Heart left ventricle (tissue), 16 donors: ENCODE measurements at regions of chr19 and their contacts with region 1.

Region 1: GRCh38 chr19:2475702-2476450 is at the start of gene GADD45B:
- DNase-seq: peak; percentile 98
- ATAC-seq: peak; percentile 78 to 89 (median 84)
- H3K4me3 ChIP-seq: peak within 1 kb of the TSS; percentile 60 to 98 (median 88)
- H3K27ac ChIP-seq: peak within 1 kb of the TSS; percentile 82 to 96 (median 91)
- H3K4me1 ChIP-seq: peaks cover 4 to 42% (median 28%) of the 10 kb centered on the region in 12 donors
- H3K27me3 ChIP-seq: no peaks in the 10 kb centered on the region
- CTCF ChIP-seq: no peak
- POLR2A ChIP-seq: peak; percentile 100
- total RNA-seq, gene GADD45B: 20.3 to 155 (median 46.6) TPM

Region 2: DNA sequence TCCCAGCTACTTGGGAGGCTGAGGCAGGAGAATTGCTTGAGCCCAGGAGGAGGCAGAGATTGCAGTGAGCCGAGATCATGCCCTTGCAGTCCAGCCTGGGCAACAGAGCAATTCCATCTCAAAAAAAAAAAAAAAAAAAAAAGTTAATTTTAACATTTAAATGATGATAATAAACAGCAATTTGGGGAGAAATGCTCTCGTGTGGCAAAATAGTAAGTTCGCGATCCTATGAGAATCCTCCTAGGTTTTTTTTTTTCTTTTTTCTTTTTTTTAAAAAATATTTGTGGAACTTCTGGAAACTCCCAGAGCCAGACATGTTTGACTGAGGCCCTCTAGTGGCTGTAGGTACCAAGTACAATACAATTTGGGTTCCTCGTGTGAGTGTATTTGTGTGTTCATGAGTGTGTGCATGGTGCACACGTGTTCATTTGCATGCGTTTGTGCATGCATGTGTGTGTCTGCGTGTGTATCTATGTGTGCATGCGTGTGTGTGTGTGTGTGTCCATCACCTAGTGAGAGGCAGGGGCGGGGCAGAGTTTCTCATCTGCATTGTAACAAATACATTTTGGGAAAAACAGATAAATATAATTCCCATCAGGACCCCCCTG is 84.7 kb before region 1 on chr19:
- intact Hi-C with region 1: no loop called
- DNase-seq: peak in 2 of 5 donors; percentile 34 to 35
- ATAC-seq: peak in 3 of 4 donors; percentile 50 to 62 (median 62)
- H3K4me3 ChIP-seq: no peak overlapping the region
- H3K27ac ChIP-seq: no peak overlapping the region
- H3K4me1 ChIP-seq: peaks cover 0 to 5% (median 0%) of the 10 kb centered on the region in 12 donors
- H3K27me3 ChIP-seq: peaks cover 0 to 20% (median 0%) of the 10 kb centered on the region in 9 donors
- CTCF ChIP-seq: peak; percentile 67 to 78 (median 74)
- POLR2A ChIP-seq: no peak

Region 3: GRCh38 chr19:2494444-2495129 is 18.7 kb after region 1 on chr19:
- intact Hi-C with region 1: loop called in 4 of 10 experiments (anchors 1 to 2 kb)
- DNase-seq: peak; percentile 87 to 94 (median 89)
- ATAC-seq: peak; percentile 52 to 81 (median 78)
- H3K4me3 ChIP-seq: peak overlapping the region; percentile 39 to 76 (median 66)
- H3K27ac ChIP-seq: peak overlapping the region; percentile 75 to 98 (median 92)
- H3K4me1 ChIP-seq: peaks cover 2 to 47% (median 23%) of the 10 kb centered on the region in 12 donors
- H3K27me3 ChIP-seq: peaks cover 0 to 27% (median 0%) of the 10 kb centered on the region in 9 donors
- CTCF ChIP-seq: no peak
- POLR2A ChIP-seq: peak in 1 of 2 donors; percentile 24

Region 4: GRCh38 chr19:2524838-2525723 is 49.2 kb after region 1 on chr19:
- intact Hi-C with region 1: loop called in 1 of 10 experiments (anchors 5 kb)
- DNase-seq: peak in 3 of 5 donors; percentile 54 to 68 (median 56)
- ATAC-seq: peak; percentile 40 to 74 (median 66)
- H3K4me3 ChIP-seq: peak overlapping the region in 9 of 12 donors; percentile 1 to 40 (median 24)
- H3K27ac ChIP-seq: peak overlapping the region in 2 of 12 donors; percentile 14 to 60
- H3K4me1 ChIP-seq: peaks cover 0 to 20% (median 7%) of the 10 kb centered on the region in 12 donors
- H3K27me3 ChIP-seq: no peaks in the 10 kb centered on the region
- CTCF ChIP-seq: no peak
- POLR2A ChIP-seq: no peak

Region 5: GRCh38 chr19:2543463-2544442 is 67.9 kb after region 1 on chr19:
- intact Hi-C with region 1: loop called (anchors 1 to 5 kb)
- DNase-seq: peak; percentile 91 to 98 (median 96)
- ATAC-seq: peak; percentile 68 to 88 (median 82)
- H3K4me3 ChIP-seq: peak overlapping the region in 9 of 12 donors; percentile 20 to 46 (median 36)
- H3K27ac ChIP-seq: peak overlapping the region; percentile 80 to 97 (median 90)
- H3K4me1 ChIP-seq: peaks cover 27 to 80% (median 70%) of the 10 kb centered on the region in 12 donors
- H3K27me3 ChIP-seq: no peaks in the 10 kb centered on the region
- CTCF ChIP-seq: peak in 9 of 12 donors; percentile 11 to 66 (median 34)
- POLR2A ChIP-seq: peak in 1 of 2 donors; percentile 50

Region 6: GRCh38 chr19:2578901-2579677 is 103.2 kb after region 1 on chr19:
- intact Hi-C with region 1: loop called in 9 of 10 experiments (anchors 1 to 2 kb)
- DNase-seq: peak; percentile 88 to 94 (median 91)
- ATAC-seq: peak; percentile 82 to 90 (median 86)
- H3K4me3 ChIP-seq: peak overlapping the region; percentile 4 to 75 (median 54)
- H3K27ac ChIP-seq: peak overlapping the region; percentile 71 to 92 (median 84)
- H3K4me1 ChIP-seq: peaks cover 8 to 53% (median 33%) of the 10 kb centered on the region in 12 donors
- H3K27me3 ChIP-seq: no peaks in the 10 kb centered on the region
- CTCF ChIP-seq: peak; percentile 86 to 97 (median 95)
- POLR2A ChIP-seq: peak in 1 of 2 donors; percentile 40

Region 7: DNA sequence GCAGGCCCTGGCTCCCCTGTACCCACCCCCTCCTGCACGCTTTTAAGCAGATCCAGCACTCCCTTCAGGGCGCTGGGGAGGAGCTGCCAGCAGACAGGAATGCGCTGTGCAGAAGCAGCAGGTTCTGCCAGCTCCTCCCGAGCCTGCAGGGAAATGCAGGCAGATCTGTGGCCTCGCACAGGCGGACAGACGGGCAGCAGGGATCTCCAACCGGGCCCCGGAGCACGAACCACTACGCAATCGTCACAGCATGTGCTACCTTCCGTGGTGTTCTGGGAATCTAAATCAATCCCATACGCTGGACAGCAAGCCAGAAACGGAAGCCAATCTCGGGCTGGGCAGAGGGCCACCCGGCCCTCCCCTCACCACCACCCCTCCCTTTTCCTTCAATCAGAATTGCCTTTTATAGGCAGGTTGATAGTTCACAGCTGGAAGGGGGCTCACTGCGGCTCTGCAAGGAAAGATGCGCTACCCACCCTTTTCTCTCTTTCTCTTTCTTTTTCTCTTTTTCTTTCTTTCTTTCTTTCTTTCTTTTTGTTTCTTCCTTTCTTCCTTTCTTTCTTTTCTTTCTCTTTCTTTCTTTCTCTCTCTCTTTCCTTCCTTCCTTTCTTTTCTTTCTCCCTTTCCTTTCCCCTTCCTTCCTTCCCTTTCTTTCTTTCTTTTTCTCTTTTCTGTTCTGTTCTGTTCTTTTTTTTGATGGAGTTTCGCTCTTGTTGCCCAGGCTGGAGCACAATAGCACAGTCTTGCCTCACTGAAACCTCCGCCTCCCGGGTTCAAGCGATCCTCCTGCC is 126.7 kb after region 1 on chr19:
- intact Hi-C with region 1: loop called in 1 of 10 experiments (anchors 2 kb)
- DNase-seq: peak; percentile 72 to 95 (median 88)
- ATAC-seq: peak; percentile 83 to 95 (median 88)
- H3K4me3 ChIP-seq: peak overlapping the region in 9 of 12 donors; percentile 7 to 42 (median 19)
- H3K27ac ChIP-seq: peak overlapping the region; percentile 54 to 94 (median 82)
- H3K4me1 ChIP-seq: peaks cover 0 to 40% (median 22%) of the 10 kb centered on the region in 12 donors
- H3K27me3 ChIP-seq: no peaks in the 10 kb centered on the region
- CTCF ChIP-seq: peak in 1 of 12 donors; percentile 8
- POLR2A ChIP-seq: peak in 1 of 2 donors; percentile 51

Region 8: GRCh38 chr19:2610637-2611482 is 135.0 kb after region 1 on chr19:
- intact Hi-C with region 1: loop called (anchors 1 to 2 kb)
- DNase-seq: peak; percentile 91 to 97 (median 94)
- ATAC-seq: peak; percentile 87 to 95 (median 92)
- H3K4me3 ChIP-seq: peak overlapping the region in 11 of 12 donors; percentile 28 to 59 (median 52)
- H3K27ac ChIP-seq: peak overlapping the region; percentile 73 to 90 (median 82)
- H3K4me1 ChIP-seq: peaks cover 0 to 32% (median 11%) of the 10 kb centered on the region in 12 donors
- H3K27me3 ChIP-seq: no peaks in the 10 kb centered on the region
- CTCF ChIP-seq: peak; percentile 96 to 100 (median 98)
- POLR2A ChIP-seq: peak in 1 of 2 donors; percentile 61